ENCODE measurements at regions of chr3 and their contacts with region 1.

Region 1: DNA sequence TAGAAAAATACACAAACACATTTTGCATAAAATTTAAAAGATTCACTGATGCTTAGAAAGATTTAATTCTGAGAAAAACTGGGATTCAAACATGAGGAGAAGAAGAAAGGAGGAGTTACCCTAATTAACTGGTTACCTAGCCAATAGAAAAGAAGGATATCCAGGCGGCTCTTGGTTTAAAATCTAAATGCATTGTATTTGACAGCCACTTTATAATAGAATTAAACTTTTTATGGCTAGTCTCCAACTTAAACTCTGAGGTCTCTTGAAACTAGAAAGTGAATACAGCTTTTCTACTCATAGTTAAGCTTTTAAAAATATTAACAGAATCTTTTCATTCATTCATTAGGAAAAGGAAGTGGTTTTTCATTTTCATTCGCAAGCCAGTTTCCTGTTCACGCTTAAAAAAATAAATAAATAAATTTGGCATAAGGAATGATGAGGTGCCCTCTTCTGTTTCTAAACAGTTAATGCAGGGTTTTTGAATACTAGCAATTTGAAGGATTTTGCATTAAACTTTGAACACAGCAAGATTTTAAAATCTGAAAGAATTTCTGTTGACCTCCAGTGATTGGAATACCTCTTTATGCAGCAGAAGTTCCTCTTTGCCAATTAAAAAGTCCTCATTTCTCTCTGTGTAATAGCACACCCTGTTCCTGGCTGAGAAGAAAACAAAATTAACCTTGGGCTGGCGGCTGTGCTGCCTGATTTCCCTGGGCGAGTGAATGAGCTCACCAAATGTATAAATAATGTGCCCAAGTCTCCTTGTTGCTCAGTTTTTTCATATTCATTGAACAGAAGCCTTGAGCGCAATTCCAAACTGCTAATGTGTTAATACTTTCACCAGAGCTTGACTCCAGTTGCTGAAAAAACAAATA is 105.1 kb downstream of the ZMAT3 start:
- DNase-seq: peak; percentile 35
- ATAC-seq: peak; percentile 15
- H3K4me3 ChIP-seq: peak overlapping the region in 4 of 5 experiments; percentile 2 to 31 (median 14)
- H3K4me3 Mint-ChIP-seq: peak overlapping the region; percentile 77
- H3K27ac ChIP-seq: peak overlapping the region; percentile 54 to 79
- H3K27ac Mint-ChIP-seq: peak overlapping the region; percentile 78
- H3K4me1 ChIP-seq: peaks cover 36 to 38% of the 10 kb centered on the region in 2 donors
- H3K4me1 Mint-ChIP-seq: peaks cover 40% of the 10 kb centered on the region
- H3K27me3 ChIP-seq: peaks cover 0 to 6% (median 0%) of the 10 kb centered on the region in 4 experiments
- H3K27me3 Mint-ChIP-seq: no peaks in the 10 kb centered on the region
- CTCF ChIP-seq: peak; percentile 57

Region 2: DNA sequence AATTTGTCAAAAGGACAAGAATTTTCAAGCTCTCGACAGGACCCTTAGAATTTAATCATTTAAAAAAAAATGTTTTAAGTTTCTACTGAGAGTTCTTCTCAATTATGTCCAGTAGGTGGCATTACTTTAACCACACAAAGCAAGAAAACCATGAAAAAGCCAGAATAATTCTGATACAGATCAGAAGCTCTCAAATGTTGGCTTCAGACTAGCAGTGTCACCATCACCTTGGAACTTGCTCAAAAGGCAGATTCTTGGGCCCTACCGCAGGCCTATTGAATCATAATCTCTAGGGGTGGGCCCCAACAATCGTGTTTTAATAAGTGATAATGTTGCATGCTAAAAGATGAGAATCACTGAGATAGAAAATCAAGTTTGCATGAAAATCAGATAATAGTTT is 529.8 kb before region 1 on chr3:
- CTCF ChIA-PET with region 1: interaction called, 13 read pairs
- POLR2A ChIA-PET with region 1: no interaction called
- intact Hi-C with region 1: no loop called
- DNase-seq: peak; percentile 9
- ATAC-seq: no peak
- H3K4me3 ChIP-seq: no peak overlapping the region
- H3K4me3 Mint-ChIP-seq: no peak overlapping the region
- H3K27ac ChIP-seq: no peak overlapping the region
- H3K27ac Mint-ChIP-seq: no peak overlapping the region
- H3K4me1 ChIP-seq: no peaks in the 10 kb centered on the region
- H3K4me1 Mint-ChIP-seq: peaks cover 2% of the 10 kb centered on the region
- H3K27me3 ChIP-seq: no peaks in the 10 kb centered on the region
- H3K27me3 Mint-ChIP-seq: peaks cover 5% of the 10 kb centered on the region
- CTCF ChIP-seq: peak; percentile 56

Region 3: GRCh38 chr3:178943591-178943990 is 22.9 kb before region 1 on chr3:
- CTCF ChIA-PET with region 1: no interaction called
- POLR2A ChIA-PET with region 1: no interaction called
- intact Hi-C with region 1: no loop called
- DNase-seq: no peak
- ATAC-seq: no peak
- H3K4me3 ChIP-seq: no peak overlapping the region
- H3K4me3 Mint-ChIP-seq: no peak overlapping the region
- H3K27ac ChIP-seq: no peak overlapping the region
- H3K27ac Mint-ChIP-seq: no peak overlapping the region
- H3K4me1 ChIP-seq: no peaks in the 10 kb centered on the region
- H3K4me1 Mint-ChIP-seq: no peaks in the 10 kb centered on the region
- H3K27me3 ChIP-seq: no peaks in the 10 kb centered on the region
- H3K27me3 Mint-ChIP-seq: no peaks in the 10 kb centered on the region
- CTCF ChIP-seq: no peak

Region 4: GRCh38 chr3:178986456-178986855 is 19.9 kb after region 1 on chr3:
- CTCF ChIA-PET with region 1: no interaction called
- POLR2A ChIA-PET with region 1: no interaction called
- intact Hi-C with region 1: no loop called
- DNase-seq: no peak
- ATAC-seq: no peak
- H3K4me3 ChIP-seq: no peak overlapping the region
- H3K4me3 Mint-ChIP-seq: no peak overlapping the region
- H3K27ac ChIP-seq: no peak overlapping the region
- H3K27ac Mint-ChIP-seq: no peak overlapping the region
- H3K4me1 ChIP-seq: no peaks in the 10 kb centered on the region
- H3K4me1 Mint-ChIP-seq: peaks cover 2% of the 10 kb centered on the region
- H3K27me3 ChIP-seq: no peaks in the 10 kb centered on the region
- H3K27me3 Mint-ChIP-seq: no peaks in the 10 kb centered on the region
- CTCF ChIP-seq: no peak

Region 5: DNA sequence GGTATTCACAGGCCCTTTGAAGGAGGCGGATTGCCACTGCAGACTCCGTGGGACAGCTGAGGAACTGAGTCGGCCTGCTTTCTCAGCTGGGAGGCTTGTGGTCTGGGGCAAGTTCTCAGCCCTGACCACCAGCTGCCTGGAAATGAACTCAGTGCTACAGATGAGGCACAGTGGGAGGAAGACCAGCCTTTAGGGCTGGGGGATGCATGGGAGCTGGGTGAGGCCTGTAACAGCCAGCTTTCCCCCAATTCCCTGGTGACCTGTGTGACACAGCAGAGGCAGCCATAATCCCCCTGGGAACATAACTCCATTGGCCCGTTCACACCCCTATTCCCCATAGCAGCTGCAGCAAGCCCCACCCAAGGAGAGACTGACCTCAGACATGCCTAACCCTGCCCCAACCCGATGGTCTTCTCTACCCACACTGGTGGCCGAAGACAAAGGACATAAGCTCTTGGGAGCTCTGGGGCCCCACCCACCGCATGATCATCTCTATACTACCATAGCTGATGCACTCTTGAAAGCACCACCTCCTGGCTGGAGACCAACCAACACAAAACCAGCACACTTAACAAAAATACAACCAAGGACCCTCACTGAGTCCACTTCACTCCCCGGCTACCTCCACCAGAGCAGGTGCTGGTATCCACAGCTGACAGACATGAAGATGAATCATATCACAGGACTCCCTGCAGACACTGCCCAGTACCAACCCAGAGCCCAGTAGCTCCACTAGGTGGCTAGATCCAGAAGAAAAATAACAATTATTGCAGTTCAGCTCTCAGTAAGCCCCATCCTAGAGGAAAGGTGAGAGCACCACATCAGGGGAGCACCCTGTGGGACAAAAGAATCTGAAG is 80.2 kb after region 1 on chr3:
- CTCF ChIA-PET with region 1: no interaction called
- POLR2A ChIA-PET with region 1: no interaction called
- intact Hi-C with region 1: loop called (anchors 10 kb)
- DNase-seq: peak; percentile 54
- ATAC-seq: peak; percentile 85
- H3K4me3 ChIP-seq: no peak overlapping the region
- H3K4me3 Mint-ChIP-seq: peak overlapping the region; percentile 78
- H3K27ac ChIP-seq: peak overlapping the region; percentile 22 to 51
- H3K27ac Mint-ChIP-seq: peak overlapping the region; percentile 78
- H3K4me1 ChIP-seq: peaks cover 18 to 20% of the 10 kb centered on the region in 2 donors
- H3K4me1 Mint-ChIP-seq: peaks cover 53% of the 10 kb centered on the region
- H3K27me3 ChIP-seq: no peaks in the 10 kb centered on the region
- H3K27me3 Mint-ChIP-seq: no peaks in the 10 kb centered on the region
- CTCF ChIP-seq: no peak

Region 6: GRCh38 chr3:179510496-179510895 is 544.0 kb after region 1 on chr3:
- CTCF ChIA-PET with region 1: no interaction called
- POLR2A ChIA-PET with region 1: no interaction called
- intact Hi-C with region 1: no loop called
- DNase-seq: no peak
- ATAC-seq: no peak
- H3K4me3 ChIP-seq: no peak overlapping the region
- H3K4me3 Mint-ChIP-seq: no peak overlapping the region
- H3K27ac ChIP-seq: no peak overlapping the region
- H3K27ac Mint-ChIP-seq: no peak overlapping the region
- H3K4me1 ChIP-seq: no peaks in the 10 kb centered on the region
- H3K4me1 Mint-ChIP-seq: no peaks in the 10 kb centered on the region
- H3K27me3 ChIP-seq: no peaks in the 10 kb centered on the region
- H3K27me3 Mint-ChIP-seq: peaks cover 23% of the 10 kb centered on the region
- CTCF ChIP-seq: no peak

Region 7: DNA sequence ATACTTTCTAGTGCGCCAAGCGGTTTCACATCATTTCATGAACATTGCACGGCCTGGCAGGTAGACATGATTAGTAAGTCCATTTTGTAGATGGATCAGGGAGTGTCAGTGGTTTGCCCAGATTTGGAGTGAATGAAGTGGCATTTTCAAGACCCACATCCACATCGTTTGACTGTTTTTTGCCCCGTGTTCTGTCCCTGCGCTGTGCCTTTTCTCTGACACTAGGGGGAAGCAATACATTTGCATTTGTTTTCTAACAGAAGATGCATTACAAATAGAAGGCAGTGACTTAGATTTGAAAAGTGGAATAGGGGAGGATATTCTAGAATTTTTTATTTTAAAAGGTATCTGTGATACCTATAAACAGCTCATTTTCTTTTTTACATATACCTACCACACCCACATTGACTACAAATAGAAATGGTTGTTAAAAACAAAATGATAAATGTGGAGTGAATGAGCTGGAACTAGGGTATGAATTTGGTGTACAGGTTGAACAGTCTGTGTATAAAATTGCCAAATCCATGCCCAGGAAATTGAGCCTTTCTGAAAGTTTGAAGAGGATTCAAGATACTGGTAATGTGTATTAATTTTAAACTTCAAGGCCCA is 784.3 kb after region 1 on chr3:
- CTCF ChIA-PET with region 1: no interaction called
- POLR2A ChIA-PET with region 1: no interaction called
- intact Hi-C with region 1: no loop called
- DNase-seq: no peak
- ATAC-seq: no peak
- H3K4me3 ChIP-seq: no peak overlapping the region
- H3K4me3 Mint-ChIP-seq: no peak overlapping the region
- H3K27ac ChIP-seq: no peak overlapping the region
- H3K27ac Mint-ChIP-seq: no peak overlapping the region
- H3K4me1 ChIP-seq: no peaks in the 10 kb centered on the region
- H3K4me1 Mint-ChIP-seq: no peaks in the 10 kb centered on the region
- H3K27me3 ChIP-seq: no peaks in the 10 kb centered on the region
- H3K27me3 Mint-ChIP-seq: no peaks in the 10 kb centered on the region
- CTCF ChIP-seq: no peak

Measured in B cell (primary cell).